RWPE1 (cell line): ENCODE measurements at regions of chr14 and their contacts with region 1.

Region 1: GRCh38 chr14:67526676-67527459 is 6.2 kb upstream of the PLEKHH1 start:
- DNase-seq: peak; percentile 55
- H3K27ac ChIP-seq: no peak overlapping the region
- CTCF ChIP-seq: peak; percentile 83

Region 2: DNA sequence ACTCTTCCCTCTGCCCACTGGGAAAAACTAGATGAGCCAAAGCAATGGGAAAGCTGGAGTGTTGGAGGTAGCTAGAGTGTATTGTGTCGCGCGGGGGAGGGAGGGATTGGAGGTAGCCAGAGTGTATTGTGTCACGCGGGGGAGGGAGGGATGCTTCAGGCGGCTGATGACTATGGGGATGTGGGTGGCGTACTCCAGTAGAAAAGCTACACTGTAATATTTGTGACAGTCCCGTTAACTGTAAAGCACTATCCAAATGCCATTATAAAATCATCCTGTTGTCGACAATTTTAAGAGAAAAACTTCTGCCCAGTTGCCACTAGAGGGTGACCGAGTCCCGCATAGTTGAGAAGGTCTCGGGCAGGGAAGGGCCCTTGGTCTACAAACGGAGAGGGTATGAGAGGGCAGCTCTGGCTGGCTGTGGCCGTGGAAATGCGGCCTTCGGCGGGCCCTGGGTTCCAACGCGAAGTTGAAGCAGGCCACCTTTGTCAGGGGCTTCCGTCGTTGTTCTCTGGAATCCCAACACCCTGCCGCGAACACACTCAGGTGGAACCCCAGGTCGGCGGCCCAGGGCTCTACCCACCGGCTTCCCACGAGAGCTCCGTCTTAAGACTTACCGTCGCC is 99.8 kb before region 1 on chr14:
- CTCF ChIA-PET with region 1: interaction called, 10 read pairs
- POLR2A ChIA-PET with region 1: no interaction called
- DNase-seq: peak; percentile 83
- H3K27ac ChIP-seq: 0 out of 2 replicates have a peak overlapping the region, but pooled peaks have one; percentile 16
- CTCF ChIP-seq: peak; percentile 79

Region 3: GRCh38 chr14:67564236-67564635 is 37.4 kb after region 1 on chr14:
- CTCF ChIA-PET with region 1: interaction called, 84 read pairs
- POLR2A ChIA-PET with region 1: no interaction called
- DNase-seq: no peak
- H3K27ac ChIP-seq: peak overlapping the region; percentile 69
- CTCF ChIP-seq: no peak